Ovary (tissue), 10 donors: ENCODE measurements at regions of chr1 and their contacts with region 1.

Region 1: GRCh38 chr1:112706908-112707663 is at the start of gene RHOC:
- DNase-seq: peak; percentile 91 to 93 (median 92)
- H3K4me3 ChIP-seq: peak within 1 kb of the TSS; percentile 67
- H3K27ac ChIP-seq: peak within 1 kb of the TSS; percentile 85 to 92
- H3K4me1 ChIP-seq: peaks cover 7% of the 10 kb centered on the region
- H3K27me3 ChIP-seq: no peaks in the 10 kb centered on the region
- CTCF ChIP-seq: peak; percentile 89 to 94 (median 91)
- EP300 ChIP-seq: no peak
- POLR2A ChIP-seq: peak; percentile 65
- total RNA-seq, gene RHOC: 177 to 276 (median 208) TPM

Region 2: DNA sequence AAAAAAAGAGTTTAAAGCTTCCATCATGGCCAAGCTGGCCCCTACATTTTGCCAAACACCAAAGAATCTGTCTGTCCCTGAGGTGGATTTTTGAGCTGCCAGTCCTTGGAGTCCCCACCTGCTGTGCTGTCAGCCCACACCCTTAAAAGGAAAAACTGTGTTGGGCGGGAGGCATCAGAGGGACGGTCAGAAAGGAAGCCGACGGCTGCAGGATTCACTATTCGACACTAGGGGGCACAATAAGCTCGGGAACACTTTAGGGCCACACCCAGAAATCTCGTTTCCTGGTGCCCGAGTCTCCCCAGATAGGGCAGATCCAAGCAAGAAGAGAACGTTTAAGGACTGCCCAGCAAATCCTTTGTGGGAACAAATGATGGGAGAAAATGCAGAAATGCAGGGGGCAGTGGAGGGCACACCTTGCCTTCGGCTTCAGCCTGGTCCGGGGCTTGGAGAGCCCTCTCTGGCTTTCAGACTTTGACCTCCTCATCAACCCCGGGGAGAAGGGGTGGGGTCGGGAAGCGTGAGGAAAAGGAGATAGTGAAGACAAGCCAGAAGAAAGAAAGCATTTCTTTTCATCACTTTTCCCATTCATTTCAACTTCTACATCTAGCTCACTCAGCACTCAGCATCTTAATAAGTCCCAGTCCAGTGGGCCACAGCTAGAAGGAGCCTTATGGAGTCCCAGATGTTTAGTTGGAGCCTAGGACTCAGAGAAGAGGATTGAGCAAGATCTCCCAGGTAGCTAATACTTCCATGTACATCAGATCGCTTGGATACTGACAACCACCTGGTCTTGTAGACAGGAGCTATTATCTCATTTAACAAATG is 316.1 kb before region 1 on chr1:
- intact Hi-C with region 1: loop called (anchors 2 to 10 kb)
- DNase-seq: peak; percentile 85 to 94 (median 88)
- H3K4me3 ChIP-seq: peak overlapping the region; percentile 35
- H3K27ac ChIP-seq: peak overlapping the region in 1 of 2 donors; percentile 15
- H3K4me1 ChIP-seq: peaks cover 2% of the 10 kb centered on the region
- H3K27me3 ChIP-seq: no peaks in the 10 kb centered on the region
- CTCF ChIP-seq: peak; percentile 63 to 92 (median 85)
- EP300 ChIP-seq: no peak
- POLR2A ChIP-seq: no peak

Region 3: DNA sequence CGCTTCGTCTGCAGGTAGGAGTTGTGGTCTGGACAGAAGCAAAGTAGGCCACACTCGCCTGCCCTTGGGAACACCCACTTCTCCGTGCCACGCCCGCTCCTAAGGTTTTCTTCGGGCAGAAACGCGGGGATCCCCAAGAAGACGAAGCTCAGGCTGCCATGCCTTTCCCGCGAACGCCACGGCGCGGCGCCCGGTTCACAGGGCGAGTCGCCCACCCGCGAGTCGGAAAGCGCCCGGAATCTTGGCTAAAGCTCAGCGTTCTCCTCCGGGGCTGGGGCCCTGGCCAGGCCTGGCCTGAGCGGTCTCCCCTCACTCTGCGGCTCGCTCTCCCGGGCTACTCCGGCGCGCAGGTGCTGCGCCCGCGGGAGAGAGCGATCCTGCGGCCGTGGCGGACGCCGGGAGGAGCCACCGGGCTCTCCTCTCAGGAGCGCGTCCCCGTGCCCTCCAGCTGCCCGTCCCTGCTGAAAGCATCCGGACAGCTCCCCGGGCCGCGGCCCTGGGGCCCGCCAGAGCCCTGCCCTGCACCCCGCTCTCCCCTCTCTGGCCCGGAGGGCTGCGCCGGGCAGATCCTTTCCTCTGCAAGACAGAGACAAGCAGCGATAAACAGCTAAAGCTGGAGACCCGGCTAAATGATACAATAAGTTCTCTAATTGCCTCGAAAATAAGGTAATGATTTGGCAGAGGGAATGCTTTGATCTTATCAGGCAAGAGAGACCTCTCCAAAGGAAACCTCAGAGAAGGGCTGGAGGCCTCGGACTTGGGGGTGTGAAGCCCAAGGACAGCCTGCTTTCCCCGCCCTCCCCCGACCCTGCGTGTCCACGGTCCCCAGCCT is 205.1 kb before region 1 on chr1:
- intact Hi-C with region 1: loop called in 3 of 4 experiments (anchors 2 to 10 kb)
- DNase-seq: peak; percentile 84 to 91 (median 86)
- H3K4me3 ChIP-seq: peak overlapping the region; percentile 51
- H3K27ac ChIP-seq: peak overlapping the region in 1 of 2 donors; percentile 18
- H3K4me1 ChIP-seq: peaks cover 36% of the 10 kb centered on the region
- H3K27me3 ChIP-seq: no peaks in the 10 kb centered on the region
- CTCF ChIP-seq: peak; percentile 60 to 73 (median 73)
- EP300 ChIP-seq: no peak
- POLR2A ChIP-seq: no peak

Region 4: DNA sequence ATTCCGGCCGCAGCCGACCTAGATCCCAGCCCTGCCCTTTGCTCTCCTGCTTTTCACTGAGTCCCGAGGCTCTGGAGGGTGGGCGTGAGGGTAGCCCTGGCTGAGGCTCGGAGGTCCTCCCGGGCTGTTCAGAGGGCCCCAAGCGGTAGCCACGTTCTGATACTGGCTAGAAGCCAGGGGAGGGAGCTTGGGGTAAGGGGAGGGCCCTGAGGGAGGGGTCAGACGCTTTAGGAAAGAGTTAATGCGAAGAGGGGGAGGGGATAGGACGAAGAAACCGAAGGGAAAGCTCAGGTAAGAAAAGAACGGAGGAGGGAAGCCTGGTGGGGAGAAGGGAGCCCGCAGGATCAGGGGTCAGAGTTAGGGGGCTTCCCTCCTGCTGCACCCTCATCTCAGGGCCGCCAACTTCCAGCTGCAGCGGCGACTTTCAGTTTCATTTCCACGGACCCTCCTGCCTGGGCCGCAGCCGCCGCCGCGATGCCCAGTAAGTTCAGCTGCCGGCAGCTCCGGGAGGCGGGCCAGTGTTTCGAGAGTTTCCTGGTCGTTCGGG is 32.6 kb before region 1 on chr1 and contains the start of gene MOV10:
- intact Hi-C with region 1: loop called in 1 of 4 experiments (anchors 5 kb)
- DNase-seq: peak; percentile 70 to 82 (median 75)
- H3K4me3 ChIP-seq: peak within 1 kb of the TSS; percentile 63
- H3K27ac ChIP-seq: peak within 1 kb of the TSS; percentile 90 to 96
- H3K4me1 ChIP-seq: peaks cover 4% of the 10 kb centered on the region
- H3K27me3 ChIP-seq: no peaks in the 10 kb centered on the region
- CTCF ChIP-seq: no peak
- EP300 ChIP-seq: no peak
- POLR2A ChIP-seq: no peak
- total RNA-seq, gene MOV10: 31.7 to 66.3 (median 53.5) TPM

Region 5: DNA sequence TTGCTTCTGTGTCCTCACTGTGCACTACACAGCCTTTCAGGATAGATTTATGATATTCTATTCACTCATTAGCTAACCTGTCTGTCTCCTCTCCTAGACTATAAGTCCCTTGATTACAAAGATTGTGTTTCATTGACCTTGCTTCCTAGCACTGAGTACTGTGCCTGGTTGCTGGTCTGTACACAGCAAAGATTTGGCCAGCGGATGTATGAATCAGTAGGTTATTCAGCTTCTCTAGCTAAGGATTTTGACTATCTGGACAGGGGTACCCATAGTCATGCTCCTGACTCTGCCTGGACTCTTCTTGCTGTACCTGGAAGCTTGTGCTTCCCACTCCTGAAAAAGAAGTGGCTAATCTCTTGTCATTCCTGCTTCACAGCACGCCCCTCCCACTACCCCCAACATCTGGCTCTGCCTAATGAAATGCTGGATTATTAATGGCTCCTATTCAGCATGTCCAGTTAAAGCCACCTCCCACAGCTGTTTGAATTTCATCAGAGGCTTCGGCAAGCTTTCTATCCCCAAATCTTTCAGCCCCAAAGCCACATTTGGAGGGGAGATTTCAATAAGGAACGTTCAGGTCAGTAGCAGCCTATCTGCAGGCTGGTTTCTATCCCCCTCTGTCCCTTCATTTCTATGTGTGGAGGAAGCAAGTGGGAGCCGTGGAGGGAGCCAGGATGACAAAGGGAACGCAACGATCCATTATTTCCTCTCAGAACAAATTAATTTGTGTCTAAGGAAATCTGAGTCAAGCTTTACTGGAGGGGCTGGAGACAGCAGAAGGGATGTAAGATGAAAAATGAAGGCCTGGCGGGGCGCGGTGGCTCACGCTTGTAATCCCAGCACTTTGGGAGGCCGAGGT is 72.8 kb after region 1 on chr1:
- intact Hi-C with region 1: no loop called
- DNase-seq: no peak
- H3K4me3 ChIP-seq: no peak overlapping the region
- H3K27ac ChIP-seq: no peak overlapping the region
- H3K4me1 ChIP-seq: no peaks in the 10 kb centered on the region
- H3K27me3 ChIP-seq: no peaks in the 10 kb centered on the region
- CTCF ChIP-seq: no peak
- EP300 ChIP-seq: no peak
- POLR2A ChIP-seq: no peak